ENCODE measurements at regions of chr5 and their contacts with region 1.

Region 1: GRCh38 chr5:126354012-126354857 is 69.0 kb upstream of the GRAMD2B start:
- DNase-seq: no peak
- H3K4me3 ChIP-seq: peak overlapping the region; percentile 20 to 31 (median 28)
- H3K27ac ChIP-seq: peak overlapping the region in 3 of 4 donors; percentile 28 to 52 (median 45)
- H3K4me1 ChIP-seq: peaks cover 0 to 14% (median 7%) of the 10 kb centered on the region in 4 donors
- H3K27me3 ChIP-seq: no peaks in the 10 kb centered on the region
- CTCF ChIP-seq: peak; percentile 57 to 65 (median 60)
- EP300 ChIP-seq: no peak
- POLR2A ChIP-seq: no peak

Region 2: DNA sequence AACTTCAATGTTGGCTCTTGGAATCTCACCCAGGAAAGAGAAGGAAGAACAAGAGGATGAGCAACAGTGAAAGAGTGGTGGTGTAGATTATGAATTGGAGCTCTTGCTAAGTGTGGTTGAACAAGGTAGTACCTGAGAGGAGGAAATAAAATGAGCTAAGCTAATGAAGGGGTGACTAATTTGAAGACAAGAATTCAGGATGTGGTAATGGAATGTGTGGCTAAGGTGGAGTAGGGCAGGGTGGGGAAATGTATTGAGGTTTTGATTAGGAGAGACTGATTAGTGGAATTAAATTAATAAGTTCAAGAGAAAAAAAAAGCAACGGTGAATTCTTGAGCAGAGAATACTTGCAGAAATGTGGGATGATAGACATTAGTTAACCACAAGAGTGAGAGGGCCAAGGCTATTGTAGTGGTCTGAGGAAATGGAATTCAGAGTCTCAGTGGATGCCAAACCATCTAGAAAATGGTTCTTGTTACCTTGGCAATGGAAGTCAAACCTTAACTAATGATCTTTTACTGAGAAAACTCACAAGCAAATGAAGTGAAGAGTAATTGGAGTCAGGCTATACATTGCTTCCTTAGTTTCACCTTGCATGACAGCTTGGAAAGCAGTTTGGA is 959.5 kb before region 1 on chr5:
- intact Hi-C with region 1: no loop called
- DNase-seq: no peak
- H3K4me3 ChIP-seq: no peak overlapping the region
- H3K27ac ChIP-seq: no peak overlapping the region
- H3K4me1 ChIP-seq: no peaks in the 10 kb centered on the region
- H3K27me3 ChIP-seq: no peaks in the 10 kb centered on the region
- CTCF ChIP-seq: no peak
- EP300 ChIP-seq: no peak
- POLR2A ChIP-seq: no peak

Region 3: GRCh38 chr5:126422989-126423788 is 69.0 kb after region 1 on chr5 and contains the start of gene GRAMD2B:
- intact Hi-C with region 1: loop called (anchors 1 kb)
- DNase-seq: peak; percentile 96
- H3K4me3 ChIP-seq: peak within 1 kb of the TSS; percentile 67 to 87 (median 72)
- H3K27ac ChIP-seq: peak within 1 kb of the TSS; percentile 92 to 96 (median 96)
- H3K4me1 ChIP-seq: peaks cover 19 to 43% (median 42%) of the 10 kb centered on the region in 4 donors
- H3K27me3 ChIP-seq: no peaks in the 10 kb centered on the region
- CTCF ChIP-seq: no peak
- EP300 ChIP-seq: no peak
- POLR2A ChIP-seq: peak; percentile 86
- total RNA-seq, gene GRAMD2B: 37.9 to 76.5 (median 49.4) TPM

Region 4: GRCh38 chr5:126490167-126490940 is 136.1 kb after region 1 on chr5:
- intact Hi-C with region 1: loop called (anchors 5 kb)
- DNase-seq: peak; percentile 88
- H3K4me3 ChIP-seq: no peak overlapping the region
- H3K27ac ChIP-seq: peak overlapping the region; percentile 40 to 65 (median 56)
- H3K4me1 ChIP-seq: peaks cover 7 to 34% (median 22%) of the 10 kb centered on the region in 4 donors
- H3K27me3 ChIP-seq: no peaks in the 10 kb centered on the region
- CTCF ChIP-seq: peak in 1 of 3 experiments; percentile 8
- EP300 ChIP-seq: no peak
- POLR2A ChIP-seq: no peak

Region 5: GRCh38 chr5:126544087-126544740 is 190.0 kb after region 1 on chr5:
- intact Hi-C with region 1: loop called (anchors 1 kb)
- DNase-seq: no peak
- H3K4me3 ChIP-seq: no peak overlapping the region
- H3K27ac ChIP-seq: no peak overlapping the region
- H3K4me1 ChIP-seq: peaks cover 0 to 4% (median 1%) of the 10 kb centered on the region in 4 donors
- H3K27me3 ChIP-seq: no peaks in the 10 kb centered on the region
- CTCF ChIP-seq: peak in 2 of 3 experiments; percentile 15 to 52
- EP300 ChIP-seq: no peak
- POLR2A ChIP-seq: no peak

Measured in esophagus muscularis mucosa (tissue), 4 donors.